ENCODE measurements at regions of chr17 and their contacts with region 1.

Region 1: DNA sequence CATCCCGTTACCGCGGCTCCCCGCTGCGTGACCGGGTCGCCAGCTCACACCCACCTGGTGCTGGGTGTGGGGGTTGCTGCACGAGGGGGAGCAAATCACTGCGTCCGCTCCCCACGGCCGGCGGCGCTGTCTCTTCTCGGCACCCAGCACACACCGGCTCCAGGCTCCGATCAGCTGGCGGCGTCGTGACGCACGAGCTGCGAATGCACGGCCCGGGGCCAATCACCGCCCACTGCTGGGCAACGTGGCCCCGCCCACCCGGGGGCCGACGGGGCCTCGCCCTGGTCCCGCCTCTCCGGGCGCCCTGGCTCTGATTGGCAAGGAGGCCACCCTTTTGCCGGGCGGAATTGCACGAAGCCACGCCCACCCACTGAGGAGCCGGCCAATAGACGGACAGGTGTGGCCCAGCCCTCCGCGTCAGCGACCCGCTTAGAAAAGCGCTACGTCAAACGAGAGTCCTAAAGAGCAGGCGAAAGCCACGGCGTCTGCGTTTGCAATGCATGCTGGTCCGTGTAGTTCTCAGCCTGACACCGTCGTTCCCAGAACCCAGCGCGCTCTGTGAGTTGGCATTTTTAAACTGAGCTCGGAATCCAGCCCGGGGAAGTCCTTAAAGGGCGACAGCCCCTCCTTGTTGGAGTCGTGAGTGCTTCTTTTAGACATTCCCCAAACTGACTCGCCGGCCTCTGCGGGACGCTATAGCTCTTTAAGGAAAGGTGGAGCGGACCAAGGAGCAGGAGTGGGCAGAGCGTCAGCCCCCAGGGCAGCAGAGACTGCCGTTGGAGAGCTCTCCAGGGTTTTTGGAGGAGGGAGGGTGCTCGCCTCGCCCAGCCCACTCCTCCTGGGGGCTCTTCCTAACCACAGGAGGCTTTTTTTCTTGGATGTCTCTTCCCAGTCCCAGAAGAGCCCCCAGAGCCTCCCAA is 6.2 kb upstream of the TLCD2 start:
- DNase-seq: peak; percentile 100
- ATAC-seq: peak; percentile 88
- H3K4me3 ChIP-seq: peak overlapping the region; percentile 63 to 88 (median 84)
- H3K4me3 Mint-ChIP-seq: peak overlapping the region; percentile 93
- H3K27ac ChIP-seq: peak overlapping the region; percentile 67 to 75
- H3K27ac Mint-ChIP-seq: peak overlapping the region; percentile 89
- H3K4me1 ChIP-seq: peaks cover 26 to 39% of the 10 kb centered on the region in 2 donors
- H3K4me1 Mint-ChIP-seq: peaks cover 32% of the 10 kb centered on the region
- H3K27me3 ChIP-seq: peaks cover 0 to 28% (median 8%) of the 10 kb centered on the region in 4 experiments
- H3K27me3 Mint-ChIP-seq: peaks cover 28% of the 10 kb centered on the region
- CTCF ChIP-seq: no peak

Region 2: DNA sequence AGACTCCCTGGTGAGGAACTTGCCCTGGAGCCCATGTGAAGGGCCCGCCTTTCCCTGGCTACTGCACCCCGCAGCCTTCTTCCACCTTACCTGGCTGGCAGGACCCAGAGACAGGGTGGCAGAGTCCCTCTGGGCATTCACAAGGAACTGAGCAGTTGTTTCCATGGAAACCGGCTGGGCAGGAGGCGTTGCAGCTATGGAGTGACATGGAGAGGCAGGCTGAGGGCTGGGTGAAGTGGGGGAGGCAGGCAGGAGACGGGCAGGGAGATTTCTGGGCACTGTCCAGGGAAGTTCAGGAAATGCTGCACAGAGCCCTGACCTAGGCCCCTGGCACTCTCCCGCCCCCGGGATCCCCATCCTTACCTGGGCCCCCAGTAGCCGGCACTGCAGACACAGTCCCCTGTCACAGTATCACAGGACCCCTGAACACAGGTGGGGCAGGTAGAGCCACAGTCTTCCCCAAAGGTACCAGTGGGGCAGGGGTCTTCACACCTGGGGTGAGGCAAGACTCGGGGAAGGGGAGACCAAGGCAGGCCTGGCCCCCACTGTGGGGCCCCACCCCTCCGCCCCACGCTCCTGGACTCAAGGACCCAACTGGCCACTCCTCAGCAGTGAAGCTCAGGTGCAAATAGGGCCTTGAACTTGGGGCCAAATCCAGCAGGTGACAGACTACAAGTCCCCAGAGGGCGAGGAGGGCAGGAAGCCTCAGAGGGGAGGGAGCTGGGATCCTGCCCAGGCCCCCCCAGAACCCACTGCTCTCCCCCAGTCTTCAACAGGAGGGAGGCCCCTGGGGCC is 76.6 kb before region 1 on chr17:
- CTCF ChIA-PET with region 1: no interaction called
- POLR2A ChIA-PET with region 1: no interaction called
- intact Hi-C with region 1: no loop called
- DNase-seq: no peak
- ATAC-seq: no peak
- H3K4me3 ChIP-seq: no peak overlapping the region
- H3K4me3 Mint-ChIP-seq: no peak overlapping the region
- H3K27ac ChIP-seq: no peak overlapping the region
- H3K27ac Mint-ChIP-seq: peak overlapping the region; percentile 32
- H3K4me1 ChIP-seq: peaks cover 10 to 12% of the 10 kb centered on the region in 2 donors
- H3K4me1 Mint-ChIP-seq: peaks cover 10% of the 10 kb centered on the region
- H3K27me3 ChIP-seq: peaks cover 0 to 3% (median 0%) of the 10 kb centered on the region in 4 experiments
- H3K27me3 Mint-ChIP-seq: no peaks in the 10 kb centered on the region
- CTCF ChIP-seq: no peak

Region 3: GRCh38 chr17:1673041-1673785 is 43.1 kb before region 1 on chr17:
- CTCF ChIA-PET with region 1: interaction called, 16 read pairs
- POLR2A ChIA-PET with region 1: interaction called, 7 read pairs
- intact Hi-C with region 1: loop called (anchors 5 kb)
- DNase-seq: no peak
- ATAC-seq: no peak
- H3K4me3 ChIP-seq: no peak overlapping the region
- H3K4me3 Mint-ChIP-seq: no peak overlapping the region
- H3K27ac ChIP-seq: no peak overlapping the region
- H3K27ac Mint-ChIP-seq: no peak overlapping the region
- H3K4me1 ChIP-seq: no peaks in the 10 kb centered on the region
- H3K4me1 Mint-ChIP-seq: peaks cover 7% of the 10 kb centered on the region
- H3K27me3 ChIP-seq: no peaks in the 10 kb centered on the region
- H3K27me3 Mint-ChIP-seq: no peaks in the 10 kb centered on the region
- CTCF ChIP-seq: no peak

Region 4: DNA sequence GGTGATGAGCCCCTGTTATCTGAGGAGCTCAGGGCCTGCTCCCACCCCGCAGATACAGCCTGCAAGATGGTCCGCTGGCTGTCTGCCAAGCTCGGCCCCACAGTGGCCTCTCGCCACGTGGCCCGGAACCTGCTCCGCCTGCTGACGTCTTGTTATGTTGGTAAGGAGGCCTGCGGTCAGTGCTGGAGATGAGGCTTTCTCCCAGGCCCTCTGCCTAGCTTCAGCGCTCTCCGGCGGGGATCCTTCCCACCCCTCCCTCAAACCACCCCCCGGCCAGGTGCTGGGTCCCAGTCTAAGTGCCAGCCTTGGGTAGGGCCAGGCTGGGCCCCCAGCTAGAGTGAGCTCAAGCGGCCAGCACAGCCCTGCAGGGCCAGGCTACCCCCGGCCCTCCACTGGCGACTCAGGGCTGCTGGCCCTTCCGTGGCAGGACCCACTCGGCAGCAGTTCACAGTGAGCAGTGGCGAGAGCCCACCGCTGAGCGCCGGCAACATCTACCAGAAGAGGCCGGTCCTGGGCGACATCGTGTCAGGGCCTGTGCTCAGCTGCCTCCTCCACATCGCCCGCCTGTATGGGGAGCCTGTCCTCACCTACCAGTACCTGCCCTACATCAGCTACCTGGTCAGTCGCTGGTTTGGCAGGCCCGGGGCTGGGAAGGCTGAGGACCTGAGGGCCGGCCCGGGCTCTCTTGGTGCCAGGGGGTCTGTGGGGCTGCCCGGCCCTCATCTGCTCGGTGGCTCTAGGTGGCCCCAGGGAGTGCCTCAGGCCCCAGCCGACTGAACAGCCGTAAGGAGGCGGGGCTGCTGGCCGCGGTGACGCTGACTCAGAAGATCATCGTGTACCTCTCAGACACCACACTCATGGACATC is 14.2 kb after region 1 on chr17:
- CTCF ChIA-PET with region 1: interaction called, 61 read pairs
- POLR2A ChIA-PET with region 1: interaction called, 33 read pairs
- intact Hi-C with region 1: no loop called
- DNase-seq: no peak
- ATAC-seq: no peak
- H3K4me3 ChIP-seq: no peak overlapping the region
- H3K4me3 Mint-ChIP-seq: no peak overlapping the region
- H3K27ac ChIP-seq: no peak overlapping the region
- H3K27ac Mint-ChIP-seq: peak overlapping the region; percentile 50
- H3K4me1 ChIP-seq: peaks cover 17 to 43% of the 10 kb centered on the region in 2 donors
- H3K4me1 Mint-ChIP-seq: peaks cover 53% of the 10 kb centered on the region
- H3K27me3 ChIP-seq: no peaks in the 10 kb centered on the region
- H3K27me3 Mint-ChIP-seq: no peaks in the 10 kb centered on the region
- CTCF ChIP-seq: no peak

Region 5: DNA sequence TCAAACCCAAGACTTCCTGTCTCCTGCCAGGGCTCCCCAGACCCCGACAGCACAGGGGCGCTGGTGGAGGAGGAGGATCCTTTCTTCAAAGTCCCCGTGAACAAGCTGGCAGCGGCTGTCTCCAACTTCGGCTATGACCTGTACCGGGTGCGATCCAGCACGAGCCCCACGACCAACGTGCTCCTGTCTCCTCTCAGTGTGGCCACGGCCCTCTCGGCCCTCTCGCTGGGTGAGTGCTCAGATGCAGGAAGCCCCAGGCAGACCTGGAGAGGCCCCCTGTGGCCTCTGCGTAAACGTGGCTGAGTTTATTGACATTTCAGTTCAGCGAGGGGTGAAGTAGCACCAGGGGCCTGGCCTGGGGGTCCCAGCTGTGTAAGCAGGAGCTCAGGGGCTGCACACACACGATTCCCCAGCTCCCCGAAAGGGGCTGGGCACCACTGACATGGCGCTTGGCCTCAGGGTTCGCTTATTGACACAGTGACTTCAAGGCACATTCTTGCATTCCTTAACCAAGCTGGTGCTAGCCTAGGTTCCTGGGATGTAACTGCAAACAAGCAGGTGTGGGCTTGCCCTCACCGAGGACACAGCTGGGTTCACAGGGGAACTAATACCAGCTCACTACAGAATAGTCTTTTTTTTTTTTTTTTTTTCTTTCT is 53.6 kb after region 1 on chr17:
- CTCF ChIA-PET with region 1: interaction called, 71 read pairs
- POLR2A ChIA-PET with region 1: interaction called, 11 read pairs
- intact Hi-C with region 1: loop called (anchors 2 kb)
- DNase-seq: peak; percentile 62
- ATAC-seq: peak; percentile 54
- H3K4me3 ChIP-seq: no peak overlapping the region
- H3K4me3 Mint-ChIP-seq: peak overlapping the region; percentile 68
- H3K27ac ChIP-seq: peak overlapping the region; percentile 34 to 43
- H3K27ac Mint-ChIP-seq: peak overlapping the region; percentile 90
- H3K4me1 ChIP-seq: peaks cover 26 to 55% of the 10 kb centered on the region in 2 donors
- H3K4me1 Mint-ChIP-seq: peaks cover 36% of the 10 kb centered on the region
- H3K27me3 ChIP-seq: no peaks in the 10 kb centered on the region
- H3K27me3 Mint-ChIP-seq: no peaks in the 10 kb centered on the region
- CTCF ChIP-seq: no peak

Region 6: DNA sequence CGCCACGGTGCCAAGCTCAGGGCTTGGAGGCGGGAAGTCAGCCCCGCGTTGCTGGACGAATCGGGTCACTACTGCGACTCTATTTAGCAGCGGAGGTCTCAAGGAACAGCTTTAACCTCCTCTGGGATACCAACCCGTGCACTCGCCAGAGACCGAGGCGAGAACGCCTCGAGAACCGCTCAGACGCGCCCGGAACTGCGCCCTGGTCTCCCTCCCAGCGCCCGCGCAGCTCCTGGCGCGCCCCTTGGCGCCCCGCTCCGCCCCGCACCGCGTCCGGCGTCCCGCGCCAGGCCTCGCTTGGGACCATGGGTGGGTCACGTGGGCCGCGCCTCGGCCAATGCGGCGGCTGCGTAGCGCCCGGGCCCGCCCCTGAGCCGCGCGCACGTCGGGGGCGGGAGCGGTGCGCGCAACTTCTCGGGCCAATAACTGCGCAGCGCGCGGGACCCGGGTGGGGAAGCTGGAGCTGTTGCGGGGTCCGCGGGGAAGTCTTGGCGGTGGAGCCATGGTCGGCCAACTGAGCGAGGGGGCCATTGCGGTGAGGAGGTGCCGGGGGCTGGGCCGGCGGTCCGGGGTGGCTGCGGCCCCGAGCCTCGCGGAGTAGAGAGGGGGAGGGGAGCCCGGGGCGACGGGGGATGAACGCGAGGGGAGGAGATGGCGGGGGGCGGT is 113.4 kb after region 1 on chr17 and contains the starts of genes RPA1 and SMYD4:
- CTCF ChIA-PET with region 1: interaction called, 10 read pairs
- POLR2A ChIA-PET with region 1: interaction called, 6 read pairs
- intact Hi-C with region 1: loop called (anchors 2 kb)
- DNase-seq: peak; percentile 91
- ATAC-seq: peak; percentile 97
- H3K4me3 ChIP-seq: peak within 1 kb of the TSS; percentile 64 to 87 (median 76)
- H3K4me3 Mint-ChIP-seq: peak within 1 kb of the TSS; percentile 94
- H3K27ac ChIP-seq: peak within 1 kb of the TSS; percentile 60 to 74
- H3K27ac Mint-ChIP-seq: peak within 1 kb of the TSS; percentile 89
- H3K4me1 ChIP-seq: peaks cover 13 to 30% of the 10 kb centered on the region in 2 donors
- H3K4me1 Mint-ChIP-seq: peaks cover 45% of the 10 kb centered on the region
- H3K27me3 ChIP-seq: no peaks in the 10 kb centered on the region
- H3K27me3 Mint-ChIP-seq: no peaks in the 10 kb centered on the region
- CTCF ChIP-seq: no peak
- total RNA-seq, gene RPA1: 74.2 and 94.5 TPM in 2 replicates
- total RNA-seq, gene SMYD4: 37.5 and 42.3 TPM in 2 replicates

Region 7: GRCh38 chr17:2041561-2042366 is 325.4 kb after region 1 on chr17 and contains the start of gene OVCA2:
- CTCF ChIA-PET with region 1: interaction called, 3 read pairs
- POLR2A ChIA-PET with region 1: no interaction called
- intact Hi-C with region 1: loop called (anchors 2 kb)
- DNase-seq: peak; percentile 98
- ATAC-seq: peak; percentile 92
- H3K4me3 ChIP-seq: peak within 1 kb of the TSS; percentile 69 to 84 (median 81)
- H3K4me3 Mint-ChIP-seq: peak within 1 kb of the TSS; percentile 91
- H3K27ac ChIP-seq: peak within 1 kb of the TSS; percentile 78 to 94
- H3K27ac Mint-ChIP-seq: peak within 1 kb of the TSS; percentile 92
- H3K4me1 ChIP-seq: peaks cover 12 to 15% of the 10 kb centered on the region in 2 donors
- H3K4me1 Mint-ChIP-seq: peaks cover 25% of the 10 kb centered on the region
- H3K27me3 ChIP-seq: no peaks in the 10 kb centered on the region
- H3K27me3 Mint-ChIP-seq: no peaks in the 10 kb centered on the region
- CTCF ChIP-seq: peak; percentile 59
- total RNA-seq, gene OVCA2: 22.4 and 23.2 TPM in 2 replicates

Measured in B cell (primary cell).